ENCODE measurements at regions of chr21 and their contacts with region 1.

Region 1: GRCh38 chr21:38985568-38986378 is 180.0 kb downstream of the ETS2 start:
- DNase-seq: peak; percentile 74 to 89 (median 82)
- ATAC-seq: peak; percentile 53 to 74 (median 70)
- H3K4me3 ChIP-seq: no peak overlapping the region
- H3K27ac ChIP-seq: peak overlapping the region in 10 of 12 donors; percentile 10 to 75 (median 58)
- H3K4me1 ChIP-seq: peaks cover 7 to 68% (median 63%) of the 10 kb centered on the region in 12 donors
- H3K27me3 ChIP-seq: no peaks in the 10 kb centered on the region
- CTCF ChIP-seq: no peak
- POLR2A ChIP-seq: no peak

Region 2: DNA sequence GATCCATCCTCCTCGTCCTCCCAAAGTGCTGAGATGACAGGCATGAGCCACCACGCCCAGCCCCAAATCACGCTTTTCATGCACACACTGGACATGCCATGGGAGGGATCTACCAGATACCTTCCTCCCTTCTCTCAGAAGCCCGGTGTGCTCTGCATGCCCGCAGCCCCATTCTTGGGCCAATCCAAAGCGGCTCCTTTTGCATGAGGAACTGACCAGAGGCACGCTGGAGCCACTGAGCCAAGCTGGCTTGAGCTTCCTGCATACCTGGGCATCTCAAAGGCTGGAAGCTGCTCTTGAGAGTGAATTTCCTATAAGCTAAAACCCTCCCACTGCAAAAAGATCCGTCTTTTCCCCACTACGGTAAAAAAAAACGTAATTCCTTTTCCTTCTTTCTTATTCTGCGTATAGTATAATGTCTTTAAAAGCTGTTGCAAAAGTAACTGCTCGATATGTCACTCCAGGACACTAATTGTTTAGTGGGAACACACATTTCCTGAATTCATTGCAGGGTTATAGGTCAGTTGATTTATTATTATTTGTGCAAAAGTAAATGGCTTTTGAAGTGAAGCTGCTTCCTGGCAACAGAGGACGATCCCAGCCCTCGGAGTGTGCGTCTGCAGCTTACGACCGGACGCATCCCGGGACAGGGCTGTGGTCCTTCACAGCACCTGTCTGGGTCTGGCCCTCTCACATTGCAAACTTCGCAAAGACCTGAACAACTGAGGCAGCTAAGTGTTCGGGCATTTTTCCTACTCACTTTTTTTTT is 241.8 kb before region 1 on chr21:
- intact Hi-C with region 1: loop called in 3 of 10 experiments (anchors 5 to 10 kb)
- DNase-seq: peak in 2 of 5 donors; percentile 32 to 62
- ATAC-seq: peak; percentile 39 to 95 (median 64)
- H3K4me3 ChIP-seq: peak overlapping the region in 5 of 12 donors; percentile 2 to 24 (median 16)
- H3K27ac ChIP-seq: peak overlapping the region in 9 of 12 donors; percentile 10 to 62 (median 46)
- H3K4me1 ChIP-seq: peaks cover 0 to 20% (median 0%) of the 10 kb centered on the region in 12 donors
- H3K27me3 ChIP-seq: no peaks in the 10 kb centered on the region
- CTCF ChIP-seq: no peak
- POLR2A ChIP-seq: no peak

Region 3: GRCh38 chr21:38811257-38811656 is 174.5 kb before region 1 on chr21:
- intact Hi-C with region 1: loop called in 4 of 10 experiments (anchors 5 kb)
- DNase-seq: no peak
- ATAC-seq: no peak
- H3K4me3 ChIP-seq: peak overlapping the region in 4 of 12 donors; percentile 90 to 97 (median 95)
- H3K27ac ChIP-seq: peak overlapping the region in 11 of 12 donors; percentile 17 to 99 (median 96)
- H3K4me1 ChIP-seq: peaks cover 0 to 70% (median 34%) of the 10 kb centered on the region in 12 donors
- H3K27me3 ChIP-seq: no peaks in the 10 kb centered on the region
- CTCF ChIP-seq: no peak
- POLR2A ChIP-seq: no peak

Region 4: GRCh38 chr21:38819714-38820183 is 166.0 kb before region 1 on chr21:
- intact Hi-C with region 1: loop called in 2 of 10 experiments (anchors 5 kb)
- DNase-seq: no peak
- ATAC-seq: no peak
- H3K4me3 ChIP-seq: no peak overlapping the region
- H3K27ac ChIP-seq: peak overlapping the region in 4 of 12 donors; percentile 0 to 67 (median 31)
- H3K4me1 ChIP-seq: peaks cover 3 to 74% (median 31%) of the 10 kb centered on the region in 12 donors
- H3K27me3 ChIP-seq: no peaks in the 10 kb centered on the region
- CTCF ChIP-seq: no peak
- POLR2A ChIP-seq: no peak

Region 5: DNA sequence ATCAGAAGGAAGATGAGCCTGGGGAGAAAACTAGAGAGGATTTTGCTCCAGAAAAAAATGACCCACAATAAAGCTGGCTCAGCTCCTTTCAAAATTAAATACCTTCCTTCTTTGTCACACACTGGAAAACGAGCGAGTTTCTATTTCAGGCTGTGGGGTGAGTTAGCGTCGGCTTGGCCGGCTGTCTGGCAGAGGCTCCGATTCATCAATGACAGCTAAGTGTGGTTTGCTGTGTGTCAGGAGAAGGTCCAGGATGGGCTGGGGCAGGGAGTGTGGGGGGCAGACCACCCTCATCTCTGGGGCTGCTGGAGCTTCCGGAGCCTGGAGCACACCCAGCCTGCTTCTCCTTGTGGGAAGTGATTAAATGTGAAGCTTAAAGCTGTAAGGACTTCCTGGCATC is 59.9 kb before region 1 on chr21:
- intact Hi-C with region 1: loop called in 2 of 10 experiments (anchors 5 kb)
- DNase-seq: peak; percentile 72 to 84 (median 74)
- ATAC-seq: peak; percentile 83 to 95 (median 92)
- H3K4me3 ChIP-seq: peak overlapping the region in 10 of 12 donors; percentile 26 to 43 (median 36)
- H3K27ac ChIP-seq: peak overlapping the region; percentile 51 to 89 (median 72)
- H3K4me1 ChIP-seq: peaks cover 0 to 39% (median 16%) of the 10 kb centered on the region in 12 donors
- H3K27me3 ChIP-seq: no peaks in the 10 kb centered on the region
- CTCF ChIP-seq: no peak
- POLR2A ChIP-seq: no peak

Region 6: GRCh38 chr21:39125752-39126485 is 140.1 kb after region 1 on chr21:
- intact Hi-C with region 1: loop called in 1 of 10 experiments (anchors 10 kb)
- DNase-seq: peak in 4 of 5 donors; percentile 46 to 62 (median 59)
- ATAC-seq: peak; percentile 64 to 98 (median 95)
- H3K4me3 ChIP-seq: no peak overlapping the region
- H3K27ac ChIP-seq: peak overlapping the region in 2 of 12 donors; percentile 10 to 48
- H3K4me1 ChIP-seq: peaks cover 0 to 19% (median 7%) of the 10 kb centered on the region in 12 donors
- H3K27me3 ChIP-seq: no peaks in the 10 kb centered on the region
- CTCF ChIP-seq: peak; percentile 48 to 76 (median 63)
- POLR2A ChIP-seq: no peak

Region 7: GRCh38 chr21:40315635-40316034 is 1329.9 kb after region 1 on chr21:
- intact Hi-C with region 1: no loop called
- DNase-seq: no peak
- ATAC-seq: no peak
- H3K4me3 ChIP-seq: no peak overlapping the region
- H3K27ac ChIP-seq: no peak overlapping the region
- H3K4me1 ChIP-seq: no peaks in the 10 kb centered on the region
- H3K27me3 ChIP-seq: no peaks in the 10 kb centered on the region
- CTCF ChIP-seq: no peak
- POLR2A ChIP-seq: no peak

Measured in heart left ventricle (tissue), 16 donors.